SK-N-SH (cell line): ENCODE measurements at regions of chr18 and their contacts with region 1.

Region 1: GRCh38 chr18:58768293-58768974 is 96.2 kb upstream of the ZNF532 start:
- DNase-seq: peak; percentile 94
- H3K4me3 ChIP-seq: peak overlapping the region; percentile 38 to 62
- H3K27ac ChIP-seq: no peak overlapping the region; a peak in 1 of 4 replicates
- H3K4me1 ChIP-seq: peaks cover 2 to 4% of the 10 kb centered on the region in 2 experiments; a peak in 1 of 4 replicates
- H3K27me3 ChIP-seq: no peaks in the 10 kb centered on the region
- CTCF ChIP-seq: peak; percentile 82
- EP300 ChIP-seq: no peak
- RAD21 ChIP-seq: peak; percentile 83

Region 2: GRCh38 chr18:58223717-58224424 is 544.6 kb before region 1 on chr18:
- CTCF ChIA-PET with region 1: no interaction called
- POLR2A ChIA-PET with region 1: no interaction called
- DNase-seq: peak; percentile 50
- H3K4me3 ChIP-seq: peak overlapping the region; percentile 12 to 15; a peak in 2 of 4 replicates
- H3K27ac ChIP-seq: peak overlapping the region; percentile 65 to 87
- H3K4me1 ChIP-seq: peaks cover 18 to 40% of the 10 kb centered on the region in 2 experiments
- H3K27me3 ChIP-seq: no peaks in the 10 kb centered on the region
- CTCF ChIP-seq: no peak
- EP300 ChIP-seq: peak in 1 of 2 experiments; percentile 79; a peak in 2 of 4 replicates
- RAD21 ChIP-seq: no peak

Region 3: DNA sequence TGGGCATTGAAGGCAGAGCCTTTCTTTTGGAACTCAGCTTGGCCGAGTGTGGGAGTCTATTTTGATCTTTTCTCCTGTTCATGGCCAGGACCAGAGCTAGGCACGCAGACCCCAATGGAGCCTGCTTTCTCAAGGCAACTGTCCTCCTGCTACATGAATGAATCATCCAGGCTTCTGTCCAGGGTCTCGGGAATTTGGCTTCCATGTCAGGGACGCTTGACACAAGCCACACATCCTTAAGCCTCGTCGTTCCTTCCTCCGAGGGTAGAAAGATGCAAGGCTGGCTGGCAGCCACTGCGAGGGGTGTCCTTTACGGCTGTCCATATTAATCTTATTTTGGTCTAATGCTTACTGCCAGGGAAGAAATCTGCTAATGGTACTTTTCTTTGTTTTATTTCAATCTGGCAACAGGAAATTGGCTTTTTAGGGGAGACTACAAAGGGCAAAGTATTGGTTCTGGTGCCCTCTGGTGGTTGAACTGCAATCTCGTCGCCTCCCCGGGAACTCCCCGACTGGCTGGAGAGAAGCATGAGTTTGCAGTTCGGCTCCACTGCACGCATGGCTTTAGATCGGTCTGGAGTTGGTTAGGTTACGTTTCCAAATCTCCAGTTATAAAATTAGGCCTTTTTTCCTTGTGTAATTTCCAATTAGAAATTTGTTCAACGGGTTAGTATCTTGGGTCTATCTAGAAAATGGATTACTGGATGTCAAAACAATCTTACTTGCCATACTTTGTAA is 274.7 kb before region 1 on chr18:
- CTCF ChIA-PET with region 1: interaction called, 20 read pairs
- POLR2A ChIA-PET with region 1: no interaction called
- DNase-seq: peak; percentile 74
- H3K4me3 ChIP-seq: peak overlapping the region in 1 of 2 experiments; percentile 13; a peak in 1 of 4 replicates
- H3K27ac ChIP-seq: no peak overlapping the region
- H3K4me1 ChIP-seq: peaks cover 0 to 4% of the 10 kb centered on the region in 2 experiments; a peak in 1 of 4 replicates
- H3K27me3 ChIP-seq: no peaks in the 10 kb centered on the region
- CTCF ChIP-seq: peak; percentile 94
- EP300 ChIP-seq: no peak
- RAD21 ChIP-seq: peak; percentile 88

Region 4: DNA sequence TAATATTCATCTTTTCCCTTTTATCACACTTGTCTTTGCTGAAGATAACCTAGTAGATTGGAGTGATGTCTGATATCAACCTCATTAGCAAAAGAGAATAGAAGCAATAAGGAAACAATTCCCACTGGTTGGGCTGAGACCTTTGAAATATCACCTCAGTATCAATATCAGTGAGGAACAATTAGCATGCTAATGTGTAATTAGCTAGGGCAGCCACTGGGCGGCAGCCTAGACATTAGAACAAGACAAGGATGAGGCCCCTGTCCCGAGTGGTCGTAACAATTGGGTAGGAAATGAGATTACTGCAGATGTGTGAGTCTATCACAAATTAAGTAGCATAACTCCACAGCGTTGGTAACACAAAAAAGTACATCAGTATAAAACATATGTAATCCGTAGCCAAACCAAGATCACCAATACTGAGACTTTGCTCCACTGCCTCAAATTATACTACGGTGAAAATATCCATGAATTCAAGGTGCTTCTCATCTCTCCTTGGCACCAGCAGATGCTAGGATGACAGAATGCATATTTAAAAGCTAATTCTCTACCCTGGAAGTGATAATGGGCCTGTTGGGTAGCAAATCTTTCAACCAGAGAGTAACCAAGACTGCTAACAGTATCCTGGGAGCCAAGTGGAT is 238.6 kb before region 1 on chr18:
- CTCF ChIA-PET with region 1: interaction called, 162 read pairs
- POLR2A ChIA-PET with region 1: interaction called, 4 read pairs
- DNase-seq: peak; percentile 67
- H3K4me3 ChIP-seq: peak overlapping the region in 1 of 2 experiments; percentile 7; a peak in 1 of 4 replicates
- H3K27ac ChIP-seq: no peak overlapping the region
- H3K4me1 ChIP-seq: no peaks in the 10 kb centered on the region; a peak in 1 of 4 replicates
- H3K27me3 ChIP-seq: no peaks in the 10 kb centered on the region
- CTCF ChIP-seq: peak; percentile 92
- EP300 ChIP-seq: no peak
- RAD21 ChIP-seq: peak; percentile 90

Region 5: DNA sequence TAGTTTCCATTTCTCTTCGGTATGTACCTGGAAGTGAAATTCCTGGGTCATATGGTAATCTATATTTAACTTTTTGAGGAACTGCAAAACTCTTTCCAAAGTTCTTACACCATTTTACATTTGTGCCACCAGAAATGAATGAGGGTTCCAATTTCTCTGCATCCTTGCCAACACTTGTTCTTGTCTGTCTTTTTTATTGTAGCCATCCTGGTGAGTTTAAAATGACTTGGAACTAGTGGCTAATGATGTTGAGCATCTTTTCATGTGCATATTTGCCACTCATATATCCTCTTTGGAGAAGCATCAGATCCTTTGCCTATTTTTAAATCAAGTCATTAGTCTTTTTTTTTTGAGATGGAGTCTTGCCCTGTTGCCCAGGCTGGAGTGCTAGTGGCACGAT is 37.8 kb before region 1 on chr18:
- CTCF ChIA-PET with region 1: interaction called, 12 read pairs
- POLR2A ChIA-PET with region 1: no interaction called
- DNase-seq: no peak
- H3K4me3 ChIP-seq: no peak overlapping the region
- H3K27ac ChIP-seq: no peak overlapping the region
- H3K4me1 ChIP-seq: peaks cover 0 to 5% of the 10 kb centered on the region in 2 experiments; a peak in 1 of 4 replicates
- H3K27me3 ChIP-seq: no peaks in the 10 kb centered on the region
- CTCF ChIP-seq: no peak
- EP300 ChIP-seq: no peak
- RAD21 ChIP-seq: no peak

Region 6: DNA sequence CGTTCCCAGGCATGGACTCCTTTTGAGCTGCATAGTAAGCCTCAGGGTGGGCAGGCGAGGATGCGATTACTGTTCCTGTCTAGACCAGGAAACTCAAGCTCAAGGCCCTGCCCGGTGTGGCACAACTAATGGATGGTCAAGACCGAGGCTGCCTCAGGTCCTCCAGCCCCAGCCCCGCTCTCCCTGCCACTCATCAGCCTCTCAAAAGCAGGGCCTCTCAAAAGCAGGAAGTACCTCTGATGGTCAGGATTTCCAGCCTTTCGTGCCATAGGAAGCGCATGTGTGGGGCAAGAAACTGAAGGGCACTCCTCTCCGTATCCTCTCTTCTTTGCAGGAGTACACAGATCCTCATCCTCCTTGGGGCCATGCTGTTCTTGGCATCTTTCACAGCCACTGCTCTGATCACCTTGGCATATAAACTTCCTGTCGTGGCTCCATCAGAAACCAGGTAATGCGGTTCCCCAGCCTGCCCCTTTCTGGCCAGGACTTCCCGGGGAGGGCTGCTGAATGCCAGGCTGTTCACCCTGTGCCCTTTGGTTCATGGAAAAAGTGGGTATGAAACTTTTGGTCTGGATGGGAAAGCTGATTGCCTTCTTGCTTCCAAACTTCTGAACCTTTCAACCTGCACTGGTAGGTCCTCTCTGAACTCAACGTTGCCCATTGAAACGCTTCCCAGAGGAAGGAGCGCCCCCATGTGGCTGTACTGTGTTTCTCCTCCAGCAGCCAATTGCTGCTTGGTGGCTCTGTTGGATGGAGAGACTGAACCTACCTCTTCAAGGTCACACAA is 288.5 kb after region 1 on chr18:
- CTCF ChIA-PET with region 1: interaction called, 34 read pairs
- POLR2A ChIA-PET with region 1: no interaction called
- DNase-seq: peak; percentile 54
- H3K4me3 ChIP-seq: no peak overlapping the region
- H3K27ac ChIP-seq: no peak overlapping the region
- H3K4me1 ChIP-seq: peaks cover 0 to 13% of the 10 kb centered on the region in 2 experiments; a peak in 2 of 4 replicates
- H3K27me3 ChIP-seq: no peaks in the 10 kb centered on the region
- CTCF ChIP-seq: peak; percentile 87
- EP300 ChIP-seq: no peak
- RAD21 ChIP-seq: peak; percentile 90

Region 7: DNA sequence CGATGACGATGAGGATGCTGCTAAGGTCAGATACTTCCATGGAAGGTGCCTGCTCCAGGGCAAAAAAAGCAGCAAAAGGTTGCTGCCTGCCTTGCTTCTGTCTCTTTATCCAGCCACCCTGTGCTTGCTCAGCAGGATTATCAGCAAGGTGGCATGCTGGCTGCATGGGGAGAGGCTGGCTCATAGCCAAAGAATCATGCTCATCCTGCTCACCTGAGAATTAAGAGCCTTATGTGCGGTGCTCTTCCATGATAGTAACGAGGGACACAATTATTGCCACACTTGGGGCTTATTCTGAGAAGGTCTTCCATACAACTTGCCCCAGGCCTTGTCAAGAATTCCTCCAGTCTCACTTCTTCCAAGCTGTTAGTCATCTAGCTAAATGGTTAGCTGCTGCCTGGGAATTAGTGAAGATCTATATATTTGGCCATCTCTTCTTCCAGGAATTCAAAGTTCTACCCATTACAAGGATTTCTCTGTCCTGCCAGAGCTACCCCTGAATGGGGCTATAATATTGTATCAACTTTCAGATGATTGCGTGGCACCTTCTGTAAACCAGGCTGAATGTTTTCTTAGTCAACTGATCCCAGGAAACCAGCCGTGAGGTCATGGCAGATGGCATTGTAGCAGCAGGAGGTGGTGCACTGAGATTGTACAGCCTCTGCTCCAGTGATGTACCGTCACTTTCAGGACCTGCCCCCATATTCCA is 311.0 kb after region 1 on chr18:
- CTCF ChIA-PET with region 1: interaction called, 33 read pairs
- POLR2A ChIA-PET with region 1: no interaction called
- DNase-seq: no peak
- H3K4me3 ChIP-seq: no peak overlapping the region
- H3K27ac ChIP-seq: no peak overlapping the region
- H3K4me1 ChIP-seq: peaks cover 2% of the 10 kb centered on the region in 2 experiments; a peak in 2 of 4 replicates
- H3K27me3 ChIP-seq: no peaks in the 10 kb centered on the region; the same call in 1 of the 2 replicates
- CTCF ChIP-seq: no peak
- EP300 ChIP-seq: no peak
- RAD21 ChIP-seq: no peak